WTC11 (cell line): ENCODE measurements at regions of chr1 and their contacts with region 1.

Region 1: DNA sequence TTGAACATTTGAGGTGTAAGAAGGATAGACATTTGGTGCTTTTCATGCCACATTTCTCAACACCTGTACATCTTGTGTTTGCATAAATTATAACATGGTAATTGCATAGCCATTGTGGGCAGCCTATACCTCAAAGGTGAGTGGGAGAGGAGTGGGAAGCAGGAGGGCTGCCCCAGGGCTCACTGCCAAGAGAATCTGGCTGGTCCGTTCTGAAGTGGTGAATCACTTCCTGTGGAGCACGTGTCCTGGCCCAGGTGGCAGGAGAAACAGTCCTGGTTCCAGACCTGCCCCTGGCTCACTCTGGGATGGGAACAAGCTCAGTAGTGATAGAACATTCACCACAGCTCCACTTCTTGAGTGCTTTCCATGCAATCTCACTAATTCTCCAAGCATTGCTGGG is 11.6 kb upstream of the OLFML2B start:
- DNase-seq: no peak
- ATAC-seq: no peak
- H3K4me3 Mint-ChIP-seq: no peak overlapping the region
- H3K27ac Mint-ChIP-seq: no peak overlapping the region
- H3K4me1 Mint-ChIP-seq: no peaks in the 10 kb centered on the region
- H3K27me3 Mint-ChIP-seq: peaks cover 7% of the 10 kb centered on the region
- CTCF ChIP-seq: no peak

Region 2: GRCh38 chr1:161792740-161793139 is 242.5 kb before region 1 on chr1:
- CTCF ChIA-PET with region 1: interaction called, 144 read pairs
- POLR2A ChIA-PET with region 1: no interaction called
- DNase-seq: no peak
- ATAC-seq: peak; percentile 46; the same call in 1 of the 2 replicates
- H3K4me3 Mint-ChIP-seq: no peak overlapping the region
- H3K27ac Mint-ChIP-seq: no peak overlapping the region
- H3K4me1 Mint-ChIP-seq: no peaks in the 10 kb centered on the region
- H3K27me3 Mint-ChIP-seq: no peaks in the 10 kb centered on the region
- CTCF ChIP-seq: peak; percentile 26; the same call in 1 of the 2 replicates

Region 3: GRCh38 chr1:161905269-161905884 is 129.9 kb before region 1 on chr1:
- CTCF ChIA-PET with region 1: interaction called, 15 read pairs
- POLR2A ChIA-PET with region 1: no interaction called
- DNase-seq: peak; percentile 41
- ATAC-seq: peak; percentile 91
- H3K4me3 Mint-ChIP-seq: no peak overlapping the region
- H3K27ac Mint-ChIP-seq: no peak overlapping the region
- H3K4me1 Mint-ChIP-seq: peaks cover 15% of the 10 kb centered on the region
- H3K27me3 Mint-ChIP-seq: no peaks in the 10 kb centered on the region
- CTCF ChIP-seq: peak; percentile 36; the same call in 1 of the 2 replicates

Region 4: GRCh38 chr1:161973924-161974845 is 61.1 kb before region 1 on chr1:
- CTCF ChIA-PET with region 1: interaction called, 14 read pairs
- POLR2A ChIA-PET with region 1: no interaction called
- DNase-seq: no peak
- ATAC-seq: no peak
- H3K4me3 Mint-ChIP-seq: no peak overlapping the region
- H3K27ac Mint-ChIP-seq: no peak overlapping the region
- H3K4me1 Mint-ChIP-seq: peaks cover 12% of the 10 kb centered on the region
- H3K27me3 Mint-ChIP-seq: no peaks in the 10 kb centered on the region
- CTCF ChIP-seq: no peak

Region 5: DNA sequence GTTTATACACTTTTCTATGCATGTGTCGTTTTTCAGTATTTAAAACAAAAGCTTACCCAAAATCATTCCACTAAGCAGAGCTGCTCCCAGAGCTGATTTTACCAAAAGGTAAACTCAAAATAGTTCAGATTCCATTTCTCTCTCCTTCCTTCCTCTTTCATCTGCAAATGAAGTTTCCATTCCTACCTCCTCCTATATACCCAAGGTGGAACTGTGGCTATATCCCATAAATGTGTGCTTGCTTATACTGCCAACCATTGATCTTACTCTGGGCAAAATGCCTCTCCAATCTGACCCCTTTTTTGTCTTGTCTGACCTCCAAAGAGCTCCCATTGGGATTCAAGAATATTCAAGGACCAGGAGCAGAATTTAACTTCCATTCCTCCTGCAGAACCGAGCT is 21.0 kb before region 1 on chr1:
- CTCF ChIA-PET with region 1: interaction called, 12 read pairs
- POLR2A ChIA-PET with region 1: no interaction called
- DNase-seq: no peak
- ATAC-seq: peak; percentile 71
- H3K4me3 Mint-ChIP-seq: no peak overlapping the region
- H3K27ac Mint-ChIP-seq: peak overlapping the region; percentile 96
- H3K4me1 Mint-ChIP-seq: peaks cover 24% of the 10 kb centered on the region
- H3K27me3 Mint-ChIP-seq: no peaks in the 10 kb centered on the region
- CTCF ChIP-seq: no peak

Region 6: GRCh38 chr1:162023547-162024501 is 11.4 kb before region 1 on chr1 and contains the start of gene OLFML2B:
- CTCF ChIA-PET with region 1: interaction called, 29 read pairs
- POLR2A ChIA-PET with region 1: interaction called, 4 read pairs
- DNase-seq: peak; percentile 80
- ATAC-seq: peak; percentile 92
- H3K4me3 Mint-ChIP-seq: peak within 1 kb of the TSS; percentile 86
- H3K27ac Mint-ChIP-seq: no peak within 1 kb of the TSS
- H3K4me1 Mint-ChIP-seq: peaks cover 32% of the 10 kb centered on the region
- H3K27me3 Mint-ChIP-seq: peaks cover 65% of the 10 kb centered on the region
- CTCF ChIP-seq: no peak
- total RNA-seq, gene OLFML2B: 4.9 to 6.5 TPM (median 6.2 TPM) in 3 replicates

Region 7: GRCh38 chr1:162069328-162070093 is 34.3 kb after region 1 on chr1 and contains the start of gene NOS1AP:
- CTCF ChIA-PET with region 1: no interaction called
- POLR2A ChIA-PET with region 1: no interaction called
- DNase-seq: peak; percentile 86
- ATAC-seq: peak; percentile 87
- H3K4me3 Mint-ChIP-seq: peak within 1 kb of the TSS; percentile 71
- H3K27ac Mint-ChIP-seq: peak within 1 kb of the TSS; percentile 49
- H3K4me1 Mint-ChIP-seq: peaks cover 47% of the 10 kb centered on the region
- H3K27me3 Mint-ChIP-seq: no peaks in the 10 kb centered on the region; the same call in none of the 2 replicates
- CTCF ChIP-seq: no peak
- total RNA-seq, gene NOS1AP: 10.0 to 14.7 TPM (median 10.2 TPM) in 3 replicates